ENCODE measurements at regions of chr17 and their contacts with region 1.

Region 1: GRCh38 chr17:40139566-40140058 is 725 bp upstream of the CASC3 start:
- DNase-seq: no peak
- H3K4me3 Mint-ChIP-seq: peak overlapping the region; percentile 82
- H3K27ac Mint-ChIP-seq: peak overlapping the region; percentile 94
- H3K4me1 Mint-ChIP-seq: peaks cover 29% of the 10 kb centered on the region
- H3K27me3 Mint-ChIP-seq: no peaks in the 10 kb centered on the region

Region 2: GRCh38 chr17:40098846-40099618 is 40.6 kb before region 1 on chr17:
- CTCF ChIA-PET with region 1: no interaction called
- POLR2A ChIA-PET with region 1: interaction called, 11 read pairs
- DNase-seq: peak; percentile 98
- H3K4me3 Mint-ChIP-seq: peak overlapping the region; percentile 77
- H3K27ac Mint-ChIP-seq: peak overlapping the region; percentile 92
- H3K4me1 Mint-ChIP-seq: peaks cover 88% of the 10 kb centered on the region
- H3K27me3 Mint-ChIP-seq: no peaks in the 10 kb centered on the region

Region 3: GRCh38 chr17:40121181-40122135 is 18.2 kb before region 1 on chr17 and contains the start of gene MSL1:
- CTCF ChIA-PET with region 1: interaction called, 13 read pairs
- POLR2A ChIA-PET with region 1: interaction called, 66 read pairs
- DNase-seq: peak; percentile 86
- H3K4me3 Mint-ChIP-seq: peak within 1 kb of the TSS; percentile 78
- H3K27ac Mint-ChIP-seq: peak within 1 kb of the TSS; percentile 74
- H3K4me1 Mint-ChIP-seq: peaks cover 39% of the 10 kb centered on the region
- H3K27me3 Mint-ChIP-seq: no peaks in the 10 kb centered on the region
- total RNA-seq, gene MSL1: 102 to 103 TPM

Region 4: GRCh38 chr17:40151414-40151963 is 11.9 kb after region 1 on chr17:
- CTCF ChIA-PET with region 1: interaction called, 5 read pairs
- POLR2A ChIA-PET with region 1: interaction called, 15 read pairs
- DNase-seq: no peak
- H3K4me3 Mint-ChIP-seq: no peak overlapping the region
- H3K27ac Mint-ChIP-seq: no peak overlapping the region
- H3K4me1 Mint-ChIP-seq: peaks cover 40% of the 10 kb centered on the region
- H3K27me3 Mint-ChIP-seq: no peaks in the 10 kb centered on the region

Region 5: GRCh38 chr17:40219073-40219860 is 79.7 kb after region 1 on chr17 and contains the start of gene WIPF2:
- CTCF ChIA-PET with region 1: interaction called, 4 read pairs
- POLR2A ChIA-PET with region 1: interaction called, 26 read pairs
- DNase-seq: peak; percentile 97
- H3K4me3 Mint-ChIP-seq: peak within 1 kb of the TSS; percentile 90
- H3K27ac Mint-ChIP-seq: peak within 1 kb of the TSS; percentile 100
- H3K4me1 Mint-ChIP-seq: peaks cover 32% of the 10 kb centered on the region
- H3K27me3 Mint-ChIP-seq: no peaks in the 10 kb centered on the region
- total RNA-seq, gene WIPF2: 26.0 TPM

Measured in activated CD4-positive, alpha-beta memory T cell treated with anti-CD3 and anti-CD28 coated beads, Interleukin-2, amount 10 ng/mL, durations not matched to agents 7 days and 5 days (primary cell).